HCT116 (cell line): ENCODE measurements at regions of chr7 and their contacts with region 1.

Region 1: DNA sequence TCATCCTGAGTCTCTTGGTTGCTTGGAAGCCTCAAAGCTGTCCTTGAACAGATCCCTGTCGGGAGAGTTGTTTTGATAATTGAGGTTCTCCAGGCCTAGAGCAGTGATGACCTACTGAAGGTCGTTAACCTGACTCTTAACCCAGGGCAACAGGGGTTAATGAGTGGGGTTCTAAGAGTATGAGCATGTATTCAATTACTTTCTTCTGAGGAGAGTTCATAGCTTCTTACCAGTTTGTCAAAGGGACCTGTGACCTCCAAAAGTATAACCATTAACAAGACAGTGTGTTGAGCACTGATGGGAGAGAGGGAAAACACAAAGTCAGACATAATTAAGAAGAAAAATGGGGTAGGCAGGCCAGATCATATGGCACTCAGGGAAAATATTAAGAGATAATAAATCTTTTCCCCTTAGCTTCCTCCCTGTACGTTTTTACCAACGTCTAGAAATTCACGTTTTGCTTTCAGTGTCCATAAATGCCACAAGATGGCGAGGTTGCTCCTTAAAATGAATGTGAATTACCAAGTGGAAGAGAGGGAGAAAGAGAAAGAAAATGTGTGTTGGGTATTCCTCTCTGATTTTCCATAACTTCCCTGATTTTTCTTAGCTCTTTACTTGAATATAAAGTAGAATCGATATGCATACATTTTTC is 97.6 kb downstream of the SUGCT start:
- DNase-seq: peak; percentile 42
- ATAC-seq: peak; percentile 80
- H3K4me3 ChIP-seq: no peak overlapping the region
- H3K27ac ChIP-seq: no peak overlapping the region
- H3K4me1 ChIP-seq: no peaks in the 10 kb centered on the region
- H3K27me3 ChIP-seq: no peaks in the 10 kb centered on the region
- CTCF ChIP-seq: peak; percentile 47 to 65 (median 56)
- POLR2A ChIP-seq: no peak
- RAD21 ChIP-seq: peak; percentile 81

Region 2: DNA sequence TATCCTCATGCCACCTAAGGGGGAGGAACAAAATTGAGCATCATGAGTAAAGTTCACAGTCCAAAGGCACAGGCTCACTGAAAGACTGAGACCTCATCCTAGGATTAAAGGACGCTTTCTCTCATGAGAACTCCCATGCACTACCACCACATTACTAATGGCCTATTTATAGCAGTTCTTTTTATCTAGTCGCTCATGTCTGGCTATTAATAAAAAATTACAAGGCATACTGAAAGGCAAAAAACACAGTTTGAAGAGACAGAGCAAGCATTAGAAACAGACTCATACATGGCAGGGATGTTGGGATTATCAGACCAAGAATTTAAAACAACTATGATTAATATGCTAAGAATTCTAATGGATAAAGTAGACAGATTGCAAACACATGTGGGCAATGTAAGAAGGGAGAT is 328.3 kb before region 1 on chr7:
- CTCF ChIA-PET with region 1: no interaction called
- POLR2A ChIA-PET with region 1: no interaction called
- RAD21 ChIA-PET with region 1: no interaction called
- intact Hi-C with region 1: no loop called
- DNase-seq: no peak
- ATAC-seq: no peak
- H3K4me3 ChIP-seq: no peak overlapping the region
- H3K27ac ChIP-seq: no peak overlapping the region
- H3K4me1 ChIP-seq: no peaks in the 10 kb centered on the region
- H3K27me3 ChIP-seq: no peaks in the 10 kb centered on the region
- CTCF ChIP-seq: no peak
- POLR2A ChIP-seq: no peak
- RAD21 ChIP-seq: no peak

Region 3: DNA sequence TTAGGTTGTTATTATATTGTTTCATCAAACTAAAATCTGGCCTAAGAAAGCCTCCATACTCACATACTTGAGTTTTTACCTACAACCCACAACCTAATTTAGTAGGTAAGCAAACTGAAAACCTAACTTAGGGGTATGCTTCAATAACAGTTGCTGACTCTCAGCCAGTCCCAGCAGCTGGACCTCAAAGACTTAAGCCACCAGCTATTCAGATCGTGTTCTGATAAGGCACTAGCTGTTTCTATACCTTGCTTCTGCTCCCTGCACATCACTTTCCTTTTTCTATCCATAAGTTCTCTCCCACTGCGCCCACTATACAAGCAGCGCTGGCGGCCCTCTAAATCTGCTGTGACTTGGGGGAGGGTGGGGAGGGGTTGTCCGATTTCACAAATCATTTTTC is 55.3 kb before region 1 on chr7:
- CTCF ChIA-PET with region 1: no interaction called
- POLR2A ChIA-PET with region 1: no interaction called
- RAD21 ChIA-PET with region 1: no interaction called
- intact Hi-C with region 1: no loop called
- DNase-seq: no peak
- ATAC-seq: no peak
- H3K4me3 ChIP-seq: no peak overlapping the region
- H3K27ac ChIP-seq: no peak overlapping the region
- H3K4me1 ChIP-seq: peaks cover 0 to 10% of the 10 kb centered on the region in 2 experiments; a peak in 1 of 4 replicates
- H3K27me3 ChIP-seq: no peaks in the 10 kb centered on the region
- CTCF ChIP-seq: no peak
- POLR2A ChIP-seq: no peak
- RAD21 ChIP-seq: no peak

Region 4: DNA sequence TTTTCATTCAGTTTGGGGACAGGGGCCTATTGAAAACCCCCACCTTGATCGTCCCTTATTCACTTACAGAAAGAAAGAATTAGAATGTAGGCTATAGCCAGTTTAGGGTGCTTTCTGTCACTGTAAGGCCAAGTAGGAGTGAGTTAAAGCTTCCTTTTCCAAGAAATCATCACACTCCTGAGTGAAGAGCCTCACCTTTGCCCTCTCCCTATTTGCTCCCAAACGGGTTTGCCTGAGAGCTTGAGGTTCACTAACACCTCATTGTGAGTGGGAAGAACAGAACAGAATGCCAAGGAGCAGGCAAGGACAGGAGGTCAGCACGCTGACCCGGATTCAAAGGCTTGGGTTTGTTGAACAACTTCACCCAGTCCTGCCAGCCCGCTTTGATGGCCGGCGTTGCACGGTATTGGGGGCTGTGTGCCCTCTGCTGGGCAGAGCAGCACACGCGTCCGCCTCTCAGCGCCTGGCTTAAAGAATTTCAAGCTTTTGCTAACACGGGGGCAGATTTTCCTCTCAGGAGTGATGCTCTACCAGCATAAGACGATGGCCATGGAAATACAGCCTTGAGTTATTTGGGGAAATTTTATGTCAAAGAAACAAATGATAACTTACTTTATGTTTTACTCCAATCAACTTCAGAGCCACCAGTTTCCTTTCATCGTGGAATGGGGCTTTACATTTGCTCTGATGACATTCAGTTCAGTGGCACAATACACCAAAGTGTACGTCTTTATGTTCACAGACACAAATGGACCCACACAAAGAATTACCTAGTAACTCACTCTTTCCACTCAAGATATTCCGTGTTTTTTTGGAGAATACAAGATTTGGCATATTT is 372.5 kb after region 1 on chr7:
- CTCF ChIA-PET with region 1: interaction called, 16 read pairs
- POLR2A ChIA-PET with region 1: no interaction called
- RAD21 ChIA-PET with region 1: no interaction called
- intact Hi-C with region 1: loop called (anchors 2 kb)
- DNase-seq: peak; percentile 10
- ATAC-seq: peak; percentile 98
- H3K4me3 ChIP-seq: no peak overlapping the region
- H3K27ac ChIP-seq: no peak overlapping the region
- H3K4me1 ChIP-seq: no peaks in the 10 kb centered on the region
- H3K27me3 ChIP-seq: no peaks in the 10 kb centered on the region
- CTCF ChIP-seq: peak; percentile 53 to 81 (median 81); a peak in 5 of 6 replicates
- POLR2A ChIP-seq: no peak
- RAD21 ChIP-seq: peak; percentile 69

Region 5: DNA sequence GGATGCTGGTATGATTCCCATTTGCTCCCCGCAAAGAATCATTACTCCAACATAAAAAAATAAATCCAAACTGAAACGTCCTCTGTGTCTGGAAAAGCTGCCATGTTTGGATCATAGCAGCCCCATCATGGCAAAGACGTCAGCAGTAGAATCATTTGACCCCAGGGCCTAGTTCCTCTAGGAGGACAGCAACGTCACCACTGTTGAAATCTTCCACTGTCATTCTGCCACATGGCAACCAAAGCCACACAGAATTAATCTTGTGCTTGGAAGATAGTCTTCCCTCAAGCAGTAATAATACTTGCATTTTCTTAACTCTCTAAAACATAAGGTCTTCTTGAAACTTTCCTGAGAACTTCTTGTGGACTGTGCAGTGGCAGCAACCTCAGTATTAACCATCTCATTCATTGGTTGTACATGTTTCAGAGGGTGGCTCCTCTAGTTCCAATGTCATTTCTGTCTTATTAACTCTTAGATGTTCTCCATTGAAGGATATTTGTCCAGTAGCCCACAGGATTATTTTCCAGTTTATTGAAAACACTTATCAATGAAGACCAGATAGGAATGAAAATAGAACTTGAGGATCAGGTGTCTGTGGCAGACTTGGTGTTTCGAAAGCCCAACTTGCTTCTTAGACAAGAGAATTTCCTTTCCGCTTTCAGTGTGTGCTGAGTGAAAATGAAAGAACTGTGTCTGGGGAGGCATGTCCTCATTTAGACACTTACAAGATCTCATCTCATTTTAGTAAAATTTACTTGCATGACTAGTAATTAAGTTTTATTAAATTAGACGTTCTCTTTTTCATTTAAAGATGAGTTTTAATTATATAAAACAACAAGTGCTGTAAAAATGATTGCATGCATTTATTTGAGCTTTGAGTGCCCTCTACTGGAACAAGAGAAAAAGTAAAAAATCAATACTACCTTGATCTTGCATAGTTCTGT is 1499.4 kb after region 1 on chr7:
- CTCF ChIA-PET with region 1: interaction called, 5 read pairs
- POLR2A ChIA-PET with region 1: no interaction called
- RAD21 ChIA-PET with region 1: no interaction called
- intact Hi-C with region 1: loop called (anchors 5 kb)
- DNase-seq: peak; percentile 1
- ATAC-seq: no peak
- H3K4me3 ChIP-seq: no peak overlapping the region
- H3K27ac ChIP-seq: no peak overlapping the region
- H3K4me1 ChIP-seq: no peaks in the 10 kb centered on the region
- H3K27me3 ChIP-seq: 0 out of 2 replicates have a peak, but pooled peaks cover 6% of the 10 kb centered on the region
- CTCF ChIP-seq: peak in 2 of 3 experiments; percentile 27 to 50; a peak in 2 of 6 replicates
- POLR2A ChIP-seq: no peak
- RAD21 ChIP-seq: peak; percentile 59